ENCODE measurements at regions of chr1 and their contacts with region 1.

Region 1: GRCh38 chr1:19240673-19241538 is 10.4 kb downstream of the EMC1 start:
- DNase-seq: peak; percentile 77
- ATAC-seq: peak; percentile 88
- H3K4me3 Mint-ChIP-seq: no peak overlapping the region
- H3K27ac Mint-ChIP-seq: peak overlapping the region; percentile 22
- H3K4me1 Mint-ChIP-seq: no peaks in the 10 kb centered on the region
- H3K27me3 Mint-ChIP-seq: no peaks in the 10 kb centered on the region

Region 2: DNA sequence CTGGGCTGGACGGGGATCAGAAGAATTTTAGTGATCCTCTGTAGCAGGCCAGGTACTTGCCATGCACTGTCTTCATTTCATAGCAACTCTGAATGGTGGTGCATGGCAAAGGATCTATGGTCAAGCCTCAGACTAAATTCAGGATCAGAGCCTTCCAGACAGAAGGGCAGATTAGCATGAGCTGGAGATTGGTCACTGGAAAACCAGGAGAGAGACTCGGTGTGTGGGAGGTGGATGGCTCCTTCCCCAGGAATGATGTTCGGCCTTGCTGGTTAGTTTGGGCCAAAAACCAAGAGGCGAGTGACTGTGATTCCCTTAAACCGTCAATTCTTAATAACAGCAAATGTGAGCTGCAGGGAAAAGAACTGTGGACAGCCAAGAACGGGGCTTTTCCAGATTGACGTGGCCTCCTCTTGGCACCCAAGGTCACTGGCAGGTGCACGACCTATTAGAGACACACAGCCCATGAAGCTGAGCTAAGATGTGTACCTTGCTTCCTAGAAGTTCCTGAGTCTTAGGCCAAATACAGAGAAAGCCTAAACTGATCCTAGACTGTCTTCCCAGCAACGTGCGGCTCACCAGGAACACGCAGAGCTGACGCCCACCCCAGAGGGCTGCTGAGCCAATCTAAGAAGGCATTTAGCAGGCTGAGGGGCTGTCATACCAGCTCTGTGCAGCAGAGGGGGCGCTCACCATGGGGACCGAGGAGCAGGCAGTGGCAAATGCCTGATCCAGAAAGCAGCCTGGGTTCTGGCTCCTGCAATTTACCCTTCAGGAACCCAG is 357.1 kb before region 1 on chr1:
- CTCF ChIA-PET with region 1: interaction called, 15 read pairs
- DNase-seq: peak; percentile 78
- ATAC-seq: peak; percentile 69
- H3K4me3 Mint-ChIP-seq: no peak overlapping the region
- H3K27ac Mint-ChIP-seq: no peak overlapping the region
- H3K4me1 Mint-ChIP-seq: no peaks in the 10 kb centered on the region
- H3K27me3 Mint-ChIP-seq: no peaks in the 10 kb centered on the region

Region 3: DNA sequence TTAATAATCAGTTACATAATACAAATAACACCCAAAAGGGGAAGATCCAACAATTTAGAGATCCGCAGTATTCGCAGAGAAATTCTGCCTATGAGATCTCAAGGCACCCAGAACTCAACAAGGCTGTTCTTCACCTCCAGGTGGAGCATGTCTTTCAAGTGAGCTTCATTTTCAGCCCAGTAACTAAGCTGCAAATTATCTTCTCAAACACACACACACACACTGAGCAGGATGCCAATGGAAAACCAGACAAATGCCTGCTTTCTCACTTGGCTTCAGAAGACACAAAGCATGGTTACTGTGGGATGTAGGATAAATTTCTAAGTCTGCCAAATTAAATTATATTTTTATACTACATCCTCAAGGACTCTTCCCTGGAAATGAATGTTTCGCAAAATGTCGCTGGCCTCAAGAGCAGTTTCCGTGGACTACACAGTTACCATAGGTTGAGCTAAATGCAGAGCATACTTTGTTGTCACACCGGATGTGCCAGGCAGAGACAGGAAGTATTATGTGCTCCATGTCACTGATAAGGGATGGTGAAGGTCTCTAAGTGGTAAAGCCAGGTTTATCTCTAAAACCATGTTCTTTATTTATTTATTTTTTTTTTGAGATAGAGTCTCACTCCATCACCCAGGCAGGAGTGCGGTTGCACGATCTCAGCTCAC is 61.2 kb before region 1 on chr1:
- CTCF ChIA-PET with region 1: interaction called, 39 read pairs
- DNase-seq: peak; percentile 46
- ATAC-seq: peak; percentile 74
- H3K4me3 Mint-ChIP-seq: no peak overlapping the region
- H3K27ac Mint-ChIP-seq: peak overlapping the region; percentile 74
- H3K4me1 Mint-ChIP-seq: peaks cover 22% of the 10 kb centered on the region
- H3K27me3 Mint-ChIP-seq: no peaks in the 10 kb centered on the region

Region 4: DNA sequence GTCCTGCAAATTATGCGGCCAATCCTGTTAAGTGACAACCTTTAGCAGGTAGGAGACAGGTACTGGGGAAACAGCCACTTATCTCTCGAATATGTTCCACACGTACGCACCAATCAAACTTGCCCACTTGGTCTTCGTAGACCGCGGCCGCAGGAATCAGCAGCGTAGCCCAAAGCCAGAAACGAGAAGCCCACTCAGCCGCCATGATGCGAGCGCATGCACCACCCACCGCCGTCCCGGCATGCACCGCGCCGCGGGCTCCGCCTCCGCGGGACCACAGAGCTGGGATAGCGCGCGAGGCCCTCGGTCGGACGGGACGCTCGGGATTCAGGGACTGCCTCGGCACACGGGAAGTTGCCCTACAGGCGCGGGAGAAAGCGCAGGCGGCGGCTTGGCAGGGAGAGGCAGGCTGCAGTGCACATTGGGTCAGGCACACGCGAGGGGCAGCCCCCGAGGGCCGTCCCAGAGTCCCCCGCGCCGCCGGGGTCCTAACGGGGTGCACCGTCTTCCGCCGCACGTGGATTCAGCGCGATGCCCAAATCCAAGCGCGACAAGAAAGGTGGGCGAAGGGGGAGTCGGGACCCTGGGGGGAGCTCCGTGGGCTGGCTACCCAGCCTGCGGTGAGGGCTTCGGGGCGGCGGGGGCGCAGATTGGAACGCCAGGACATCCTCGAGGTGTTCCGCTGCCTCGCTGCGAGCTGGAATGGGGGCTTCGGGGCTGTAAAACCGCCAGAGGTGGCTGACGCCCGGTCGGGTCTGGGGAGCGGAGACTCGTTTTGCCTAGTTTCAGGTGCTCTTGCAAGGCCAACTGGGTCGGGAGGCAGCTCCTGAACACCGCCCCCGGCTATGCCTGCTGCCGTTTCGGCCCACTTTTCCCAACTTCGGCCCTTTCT is 10.6 kb after region 1 on chr1 and contains the starts of genes EMC1 and MRTO4:
- CTCF ChIA-PET with region 1: interaction called, 13 read pairs
- DNase-seq: peak; percentile 92
- ATAC-seq: peak; percentile 93
- H3K4me3 Mint-ChIP-seq: peak within 1 kb of the TSS; percentile 99
- H3K27ac Mint-ChIP-seq: peak within 1 kb of the TSS; percentile 92
- H3K4me1 Mint-ChIP-seq: peaks cover 48% of the 10 kb centered on the region
- H3K27me3 Mint-ChIP-seq: no peaks in the 10 kb centered on the region
- total RNA-seq, gene EMC1: 31.5 to 49.0 TPM
- total RNA-seq, gene MRTO4: 36.2 to 59.3 TPM

Region 5: GRCh38 chr1:19430121-19431068 is 189.5 kb after region 1 on chr1:
- CTCF ChIA-PET with region 1: no interaction called
- DNase-seq: no peak
- ATAC-seq: no peak
- H3K4me3 Mint-ChIP-seq: no peak overlapping the region
- H3K27ac Mint-ChIP-seq: peak overlapping the region; percentile 4
- H3K4me1 Mint-ChIP-seq: peaks cover 43% of the 10 kb centered on the region
- H3K27me3 Mint-ChIP-seq: no peaks in the 10 kb centered on the region

Measured in activated CD8-positive, alpha-beta memory T cell treated with anti-CD3 and anti-CD28 coated beads, Interleukin-2, amount 10 ng/mL, durations not matched to agents 7 days and 5 days (primary cell).